Common myeloid progenitor, CD34-positive (primary cell): ENCODE measurements at regions of chr5 and their contacts with region 1.

Region 1: GRCh38 chr5:142881076-142881783 is 111.1 kb downstream of the ARHGAP26 start:
- DNase-seq: peak; percentile 63 to 93 (median 93)
- H3K4me3 ChIP-seq: no peak overlapping the region
- H3K27ac ChIP-seq: peak overlapping the region in 1 of 2 experiments; percentile 45
- H3K4me1 ChIP-seq: peaks cover 4 to 12% (median 8%) of the 10 kb centered on the region in 4 experiments
- H3K27me3 ChIP-seq: no peaks in the 10 kb centered on the region

Region 2: DNA sequence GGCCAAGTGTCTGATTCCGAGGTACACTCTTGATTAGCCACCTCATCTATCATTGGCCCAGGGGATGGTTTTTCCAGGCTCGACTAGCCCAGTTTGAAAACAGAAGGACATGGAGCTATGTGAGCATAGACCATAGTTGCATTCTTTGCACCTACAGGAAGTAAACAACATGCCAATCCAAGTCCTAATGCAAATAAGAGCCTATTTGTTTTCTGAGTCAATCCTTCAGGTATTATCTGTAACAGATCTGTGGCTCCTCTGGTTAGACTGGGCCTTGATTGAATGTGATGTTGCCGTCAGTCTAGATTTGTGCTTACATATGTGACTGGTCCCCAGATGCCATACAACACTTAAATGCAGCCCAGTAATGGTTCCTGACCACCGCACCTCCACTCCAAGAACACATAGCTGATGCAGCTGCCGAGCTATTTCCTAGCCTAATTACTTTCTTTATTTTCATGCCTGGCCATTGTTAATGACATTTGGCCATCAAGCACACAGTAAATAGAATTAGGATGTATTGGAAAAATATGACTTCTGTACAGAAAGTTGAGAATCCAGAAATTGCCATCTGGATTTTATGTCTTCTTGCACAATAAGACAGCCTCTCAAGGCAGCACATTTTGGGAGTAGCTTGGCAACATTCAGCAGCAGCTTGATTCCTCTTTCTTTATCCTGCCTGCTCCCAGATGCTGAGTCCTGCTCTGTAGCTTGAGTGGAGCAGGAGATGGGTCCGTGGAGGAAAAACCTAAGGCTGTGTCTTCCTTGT is 140.6 kb before region 1 on chr5:
- CTCF ChIA-PET with region 1: interaction called, 115 read pairs
- POLR2A ChIA-PET with region 1: interaction called, 3 read pairs
- DNase-seq: no peak
- H3K4me3 ChIP-seq: no peak overlapping the region
- H3K27ac ChIP-seq: no peak overlapping the region
- H3K4me1 ChIP-seq: peaks cover 2 to 36% (median 21%) of the 10 kb centered on the region in 4 experiments
- H3K27me3 ChIP-seq: no peaks in the 10 kb centered on the region

Region 3: GRCh38 chr5:142769741-142770631 is 111.2 kb before region 1 on chr5 and contains the start of gene ARHGAP26:
- CTCF ChIA-PET with region 1: interaction called, 36 read pairs
- POLR2A ChIA-PET with region 1: no interaction called
- DNase-seq: peak; percentile 94 to 97 (median 96)
- H3K4me3 ChIP-seq: peak within 1 kb of the TSS; percentile 75 to 94 (median 92)
- H3K27ac ChIP-seq: peak within 1 kb of the TSS in 1 of 2 experiments; percentile 47
- H3K4me1 ChIP-seq: peaks cover 8 to 27% (median 21%) of the 10 kb centered on the region in 4 experiments
- H3K27me3 ChIP-seq: peaks cover 0 to 3% (median 0%) of the 10 kb centered on the region in 5 experiments

Region 4: DNA sequence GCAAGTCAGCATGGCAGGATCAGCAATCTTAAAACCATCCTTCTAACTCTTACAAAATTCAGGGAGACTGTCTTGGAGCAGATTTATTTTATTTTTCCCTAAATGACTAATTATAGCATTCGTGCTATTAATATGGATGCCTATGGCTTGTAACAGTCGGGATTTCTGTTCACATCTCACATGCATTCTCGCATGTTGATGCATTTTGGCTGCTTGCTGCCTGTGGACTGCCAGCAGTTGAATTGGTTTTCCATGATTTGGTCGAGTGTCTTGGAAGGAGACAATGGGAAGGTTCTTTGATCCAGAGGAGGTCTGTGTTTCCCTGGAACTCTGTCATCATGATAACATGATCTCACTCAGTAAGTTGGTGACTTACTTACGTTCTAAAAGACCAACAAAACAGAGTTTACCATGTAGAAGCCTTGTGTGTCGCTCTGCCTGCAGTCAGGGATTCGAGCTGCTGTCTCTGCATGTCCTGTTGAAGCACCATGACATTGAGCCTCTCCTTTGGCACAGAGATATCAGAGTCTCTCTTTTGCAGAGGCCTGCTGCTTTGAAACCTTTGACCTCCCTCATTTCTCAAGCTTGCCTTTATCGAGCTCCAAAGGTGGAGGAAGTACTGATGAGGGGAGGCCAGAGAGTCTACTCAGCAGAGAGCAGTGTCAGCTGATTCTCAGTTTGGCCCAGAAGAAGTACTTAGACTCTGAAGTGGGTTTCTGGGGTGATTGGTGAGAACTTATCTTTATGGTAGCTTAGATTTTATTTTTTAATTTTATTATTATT is 28.6 kb before region 1 on chr5:
- CTCF ChIA-PET with region 1: interaction called, 10 read pairs
- POLR2A ChIA-PET with region 1: no interaction called
- DNase-seq: no peak
- H3K4me3 ChIP-seq: no peak overlapping the region
- H3K27ac ChIP-seq: no peak overlapping the region
- H3K4me1 ChIP-seq: peaks cover 0 to 3% (median 0%) of the 10 kb centered on the region in 4 experiments
- H3K27me3 ChIP-seq: no peaks in the 10 kb centered on the region

Region 5: GRCh38 chr5:143033535-143034250 is 152.5 kb after region 1 on chr5:
- CTCF ChIA-PET with region 1: no interaction called
- POLR2A ChIA-PET with region 1: no interaction called
- DNase-seq: no peak
- H3K4me3 ChIP-seq: no peak overlapping the region
- H3K27ac ChIP-seq: no peak overlapping the region
- H3K4me1 ChIP-seq: peaks cover 4 to 16% (median 8%) of the 10 kb centered on the region in 4 experiments
- H3K27me3 ChIP-seq: no peaks in the 10 kb centered on the region